ENCODE measurements at regions of chr2 and their contacts with region 1.

Region 1: DNA sequence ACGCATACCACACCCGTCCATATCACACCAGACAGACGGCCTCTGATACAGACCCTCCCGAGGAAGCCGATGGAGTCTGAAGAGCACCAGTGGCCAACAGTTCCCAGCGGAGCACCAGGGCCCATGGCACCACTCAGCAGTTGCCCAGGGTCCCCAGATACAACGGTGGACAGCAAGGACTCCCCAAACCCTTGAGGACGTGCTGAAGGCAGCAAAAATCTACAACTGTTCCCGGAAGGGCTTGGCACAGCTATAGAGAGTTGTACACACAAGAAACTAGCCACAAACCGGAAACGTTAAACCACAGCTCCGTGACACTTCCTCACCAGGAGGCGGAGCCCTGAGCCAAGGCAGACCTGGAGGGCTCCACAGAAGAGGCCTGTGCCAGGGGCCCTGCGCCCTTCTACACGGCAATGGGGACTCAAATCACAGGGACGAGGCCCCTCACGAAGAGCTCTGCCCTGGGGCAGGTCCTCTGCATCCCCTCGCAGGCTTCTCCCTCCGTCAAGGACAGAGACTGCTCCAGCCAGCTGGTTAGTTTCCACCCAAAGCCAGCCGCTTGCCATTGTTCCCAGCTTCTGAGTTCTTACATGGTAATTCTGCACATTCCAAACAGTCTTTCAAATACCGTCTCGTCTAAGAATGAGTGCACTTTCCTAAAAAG is 133.4 kb downstream of the HDAC4 start:
- DNase-seq: peak; percentile 96
- H3K4me3 Mint-ChIP-seq: peak overlapping the region; percentile 97
- H3K27ac Mint-ChIP-seq: peak overlapping the region; percentile 97
- H3K4me1 Mint-ChIP-seq: peaks cover 88% of the 10 kb centered on the region
- H3K27me3 Mint-ChIP-seq: peaks cover 11% of the 10 kb centered on the region

Region 2: DNA sequence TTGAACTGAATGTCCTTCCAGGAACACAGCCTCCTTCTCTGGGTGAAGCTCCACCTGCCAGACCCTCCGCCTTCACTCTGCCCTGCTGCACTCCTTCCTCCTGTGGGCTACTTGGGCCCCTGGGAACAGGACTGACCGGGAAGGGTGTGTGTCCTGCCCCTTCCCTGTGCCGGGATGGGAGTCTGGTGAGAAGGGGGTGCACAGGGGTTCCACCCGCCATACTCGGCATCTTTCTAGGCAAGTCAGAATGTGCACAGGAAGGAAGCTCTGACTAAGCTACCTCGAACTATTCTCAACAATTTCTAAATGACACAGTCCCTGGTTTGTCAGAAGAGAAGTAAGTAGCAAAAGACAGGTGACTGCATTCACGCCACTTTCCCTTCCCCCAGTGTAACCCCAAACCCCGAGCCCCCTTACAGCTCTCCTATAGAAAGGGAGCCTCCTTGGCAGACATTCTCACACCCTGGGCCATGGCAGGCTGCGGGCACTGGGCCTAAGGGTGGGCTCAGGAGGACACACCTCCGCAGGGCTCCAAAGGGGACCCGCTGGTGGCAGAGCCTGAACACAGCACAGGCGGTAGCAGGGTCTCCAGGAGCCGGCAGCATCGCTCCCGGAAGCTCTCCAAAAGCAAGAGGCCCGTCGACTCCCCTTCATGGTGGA is 50.7 kb before region 1 on chr2:
- CTCF ChIA-PET with region 1: interaction called, 5 read pairs
- POLR2A ChIA-PET with region 1: interaction called, 15 read pairs
- DNase-seq: peak; percentile 52
- H3K4me3 Mint-ChIP-seq: peak overlapping the region; percentile 51
- H3K27ac Mint-ChIP-seq: peak overlapping the region; percentile 81
- H3K4me1 Mint-ChIP-seq: peaks cover 59% of the 10 kb centered on the region
- H3K27me3 Mint-ChIP-seq: no peaks in the 10 kb centered on the region

Region 3: DNA sequence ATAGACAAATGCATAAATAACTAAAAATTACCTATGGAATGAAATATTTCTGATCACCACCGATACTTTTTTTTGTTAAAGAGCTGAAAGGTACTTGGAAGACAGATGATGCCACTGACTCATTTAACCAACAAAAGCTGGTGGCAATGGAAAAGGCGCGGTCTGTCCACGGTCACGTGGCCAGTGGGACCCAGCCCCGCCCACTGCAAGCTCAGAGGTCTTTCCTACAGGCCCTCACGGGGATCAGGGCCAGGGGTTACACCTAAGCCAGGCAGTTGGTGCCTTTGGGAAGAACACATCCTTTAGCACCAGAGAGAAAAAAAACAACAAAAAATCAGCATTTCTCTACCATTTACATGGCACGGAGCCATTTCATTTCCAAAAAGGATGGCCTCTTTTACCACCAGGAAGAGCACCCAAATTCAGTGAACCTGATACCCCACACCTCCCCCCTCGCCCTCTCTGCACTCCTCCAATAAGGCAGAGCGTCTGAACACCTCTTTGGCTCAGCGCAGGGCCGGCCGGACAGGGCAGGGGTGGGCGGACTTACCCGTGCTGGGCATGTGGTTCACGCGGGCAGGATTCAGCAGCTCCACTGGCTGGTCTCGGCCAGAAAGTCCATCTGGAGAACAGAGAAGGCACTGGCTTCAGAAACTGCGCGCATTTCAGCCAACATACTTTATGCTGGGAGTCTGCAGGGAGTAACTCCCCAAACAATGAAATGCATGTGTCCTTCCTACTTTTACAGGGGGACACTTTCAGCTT is 31.2 kb before region 1 on chr2:
- CTCF ChIA-PET with region 1: interaction called, 3 read pairs
- POLR2A ChIA-PET with region 1: interaction called, 10 read pairs
- DNase-seq: no peak
- H3K4me3 Mint-ChIP-seq: no peak overlapping the region
- H3K27ac Mint-ChIP-seq: no peak overlapping the region
- H3K4me1 Mint-ChIP-seq: peaks cover 40% of the 10 kb centered on the region
- H3K27me3 Mint-ChIP-seq: no peaks in the 10 kb centered on the region

Region 4: GRCh38 chr2:239250216-239251071 is 17.0 kb before region 1 on chr2:
- CTCF ChIA-PET with region 1: no interaction called
- POLR2A ChIA-PET with region 1: no interaction called
- DNase-seq: no peak
- H3K4me3 Mint-ChIP-seq: no peak overlapping the region
- H3K27ac Mint-ChIP-seq: no peak overlapping the region
- H3K4me1 Mint-ChIP-seq: peaks cover 40% of the 10 kb centered on the region
- H3K27me3 Mint-ChIP-seq: no peaks in the 10 kb centered on the region

Region 5: DNA sequence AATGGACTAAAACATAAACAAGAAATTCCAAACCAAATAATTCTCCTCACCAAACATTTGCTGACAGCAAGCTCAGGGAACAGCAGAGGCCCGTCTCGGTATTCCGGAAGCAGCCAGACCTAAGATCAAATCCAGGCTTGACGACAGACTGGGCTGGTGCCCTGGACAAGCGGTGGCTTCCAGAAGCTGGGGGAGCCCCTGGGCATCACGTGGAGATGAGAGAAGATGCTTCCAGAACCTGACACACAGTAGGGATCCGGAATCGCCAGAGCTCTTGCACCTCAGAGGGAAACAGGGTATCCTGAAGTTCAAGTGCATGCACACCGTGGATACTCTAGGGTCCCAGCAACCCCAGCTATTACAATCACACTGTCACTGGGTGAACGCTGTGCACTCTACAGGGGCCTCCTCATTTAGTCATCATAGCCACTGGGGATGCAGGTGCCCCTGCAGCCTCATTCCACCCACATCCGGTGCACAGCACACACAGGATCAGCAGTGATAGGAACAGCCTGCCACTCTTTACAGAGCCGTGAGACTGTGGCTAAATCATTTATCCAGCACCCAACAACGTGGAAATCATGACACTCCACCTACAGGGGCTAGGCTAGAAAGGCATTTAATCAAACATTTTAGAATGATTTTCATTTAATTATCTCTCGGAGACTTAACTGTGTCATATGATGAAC is 30.8 kb after region 1 on chr2:
- CTCF ChIA-PET with region 1: interaction called, 10 read pairs
- POLR2A ChIA-PET with region 1: interaction called, 22 read pairs
- DNase-seq: peak; percentile 87
- H3K4me3 Mint-ChIP-seq: peak overlapping the region; percentile 76
- H3K27ac Mint-ChIP-seq: peak overlapping the region; percentile 92
- H3K4me1 Mint-ChIP-seq: peaks cover 69% of the 10 kb centered on the region
- H3K27me3 Mint-ChIP-seq: peaks cover 13% of the 10 kb centered on the region

Region 6: GRCh38 chr2:239318790-239319661 is 51.6 kb after region 1 on chr2:
- CTCF ChIA-PET with region 1: interaction called, 3 read pairs
- POLR2A ChIA-PET with region 1: interaction called, 43 read pairs
- DNase-seq: peak; percentile 31
- H3K4me3 Mint-ChIP-seq: peak overlapping the region; percentile 63
- H3K27ac Mint-ChIP-seq: peak overlapping the region; percentile 82
- H3K4me1 Mint-ChIP-seq: peaks cover 77% of the 10 kb centered on the region
- H3K27me3 Mint-ChIP-seq: no peaks in the 10 kb centered on the region

Region 7: GRCh38 chr2:239369631-239370161 is 102.3 kb after region 1 on chr2:
- CTCF ChIA-PET with region 1: no interaction called
- POLR2A ChIA-PET with region 1: interaction called, 15 read pairs
- DNase-seq: peak; percentile 81
- H3K4me3 Mint-ChIP-seq: peak overlapping the region; percentile 63
- H3K27ac Mint-ChIP-seq: no peak overlapping the region
- H3K4me1 Mint-ChIP-seq: peaks cover 10% of the 10 kb centered on the region
- H3K27me3 Mint-ChIP-seq: no peaks in the 10 kb centered on the region

Region 8: GRCh38 chr2:239401067-239401880 is 133.9 kb after region 1 on chr2:
- CTCF ChIA-PET with region 1: interaction called, 7 read pairs
- POLR2A ChIA-PET with region 1: interaction called, 46 read pairs
- DNase-seq: peak; percentile 99
- H3K4me3 Mint-ChIP-seq: peak overlapping the region; percentile 85
- H3K27ac Mint-ChIP-seq: peak overlapping the region; percentile 95
- H3K4me1 Mint-ChIP-seq: peaks cover 38% of the 10 kb centered on the region
- H3K27me3 Mint-ChIP-seq: peaks cover 14% of the 10 kb centered on the region